Right cardiac atrium (tissue), 5 donors: ENCODE measurements at regions of chr7 and their contacts with region 1.

Region 1: DNA sequence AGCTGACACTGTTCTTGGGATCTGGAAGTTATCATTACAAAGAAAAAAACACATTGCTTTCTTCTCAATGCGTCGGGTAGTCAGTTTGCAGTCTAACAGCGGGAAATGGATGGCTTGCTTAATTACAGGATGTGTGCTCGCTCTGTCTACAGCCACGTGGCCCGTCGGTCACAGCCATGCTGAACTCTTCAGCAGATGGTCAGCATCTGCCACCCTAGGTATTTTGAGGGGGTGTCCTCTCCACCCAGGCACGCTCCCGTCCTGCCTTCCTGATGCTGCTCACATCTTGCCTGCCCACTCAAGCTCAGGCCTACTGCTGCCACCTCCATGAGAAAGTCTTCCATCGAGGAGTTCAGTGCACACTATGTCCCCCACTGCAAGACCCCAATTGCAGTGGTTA is 20.3 kb upstream of the INMT start:
- DNase-seq: no peak
- ATAC-seq: no peak
- H3K4me3 ChIP-seq: no peak overlapping the region
- H3K27ac ChIP-seq: no peak overlapping the region
- H3K4me1 ChIP-seq: no peaks in the 10 kb centered on the region
- H3K27me3 ChIP-seq: no peaks in the 10 kb centered on the region

Region 2: GRCh38 chr7:30584965-30585364 is 146.7 kb before region 1 on chr7:
- intact Hi-C with region 1: no loop called
- DNase-seq: peak in 1 of 3 donors; percentile 65
- ATAC-seq: peak; percentile 77
- H3K4me3 ChIP-seq: no peak overlapping the region
- H3K27ac ChIP-seq: no peak overlapping the region
- H3K4me1 ChIP-seq: no peaks in the 10 kb centered on the region
- H3K27me3 ChIP-seq: no peaks in the 10 kb centered on the region

Region 3: GRCh38 chr7:30649717-30650420 is 81.8 kb before region 1 on chr7:
- intact Hi-C with region 1: loop called in 1 of 4 experiments (anchors 10 kb)
- DNase-seq: no peak
- ATAC-seq: no peak
- H3K4me3 ChIP-seq: no peak overlapping the region
- H3K27ac ChIP-seq: no peak overlapping the region
- H3K4me1 ChIP-seq: no peaks in the 10 kb centered on the region
- H3K27me3 ChIP-seq: no peaks in the 10 kb centered on the region